Naive thymus-derived CD4-positive, alpha-beta T cell (primary cell): ENCODE measurements at regions of chr12 and their contacts with region 1.

Region 1: GRCh38 chr12:113334786-113335540 is at the start of gene SLC8B1:
- DNase-seq: peak; percentile 68 to 96 (median 80)
- ATAC-seq: peak; percentile 100
- H3K4me3 ChIP-seq: peak within 1 kb of the TSS; percentile 86
- H3K4me3 Mint-ChIP-seq: peak within 1 kb of the TSS; percentile 92 to 100 (median 98)
- H3K27ac ChIP-seq: peak within 1 kb of the TSS; percentile 76
- H3K27ac Mint-ChIP-seq: peak within 1 kb of the TSS; percentile 88 to 96 (median 91)
- H3K4me1 ChIP-seq: peaks cover 14 to 18% of the 10 kb centered on the region in 2 donors
- H3K4me1 Mint-ChIP-seq: peaks cover 19 to 40% (median 34%) of the 10 kb centered on the region in 7 donors
- H3K27me3 ChIP-seq: no peaks in the 10 kb centered on the region
- H3K27me3 Mint-ChIP-seq: no peaks in the 10 kb centered on the region
- total RNA-seq, gene SLC8B1: 40.9 to 169 (median 140) TPM

Region 2: DNA sequence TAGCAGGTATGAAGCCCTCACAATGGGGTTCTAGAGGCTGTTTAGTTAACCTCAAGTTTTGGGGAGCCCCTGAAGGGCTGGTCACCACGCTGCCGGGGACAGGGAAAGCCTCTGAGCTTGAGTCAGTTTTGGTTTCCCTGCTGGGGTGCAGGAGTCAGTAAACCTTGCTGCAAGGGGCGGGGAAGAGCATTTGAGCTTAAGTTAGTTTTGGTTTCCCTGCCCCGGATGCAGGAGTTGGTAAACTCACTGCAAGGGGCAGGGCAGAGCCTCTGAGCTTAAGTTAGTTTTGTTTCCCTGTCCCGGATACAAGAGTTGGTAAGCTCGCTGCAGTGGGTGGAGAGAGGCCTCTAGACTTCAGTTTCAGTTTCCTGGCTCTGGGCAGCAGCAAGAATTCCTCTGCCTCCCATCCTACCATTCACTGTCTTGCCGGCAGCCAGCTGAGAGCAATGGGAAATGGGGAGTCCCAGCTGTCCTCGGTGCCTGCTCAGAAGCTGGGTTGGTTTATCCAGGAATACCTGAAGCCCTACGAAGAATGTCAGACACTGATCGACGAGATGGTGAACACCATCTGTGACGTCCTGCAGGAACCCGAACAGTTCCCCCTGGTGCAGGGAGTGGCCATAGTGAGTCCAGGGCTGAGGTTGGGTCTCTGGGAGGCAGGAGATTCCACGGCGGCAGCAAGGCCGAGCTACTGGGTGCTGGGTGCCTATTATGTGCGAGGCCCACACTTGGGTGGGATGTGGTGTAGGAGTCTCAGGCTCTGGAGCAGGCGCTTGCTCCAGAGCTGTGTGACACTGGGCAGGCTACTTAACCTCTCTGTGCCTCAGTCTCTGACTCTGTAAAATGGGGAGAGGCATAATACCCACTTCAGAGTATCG is 356.6 kb before region 1 on chr12 and contains the start of gene OAS2:
- CTCF ChIA-PET with region 1: no interaction called
- POLR2A ChIA-PET with region 1: interaction called, 7 read pairs
- intact Hi-C with region 1: loop called in 1 of 2 experiments (anchors 1 kb)
- DNase-seq: peak; percentile 35 to 89 (median 85)
- ATAC-seq: peak; percentile 97
- H3K4me3 ChIP-seq: peak within 1 kb of the TSS; percentile 99
- H3K4me3 Mint-ChIP-seq: peak within 1 kb of the TSS; percentile 87 to 100 (median 96)
- H3K27ac ChIP-seq: peak within 1 kb of the TSS; percentile 89
- H3K27ac Mint-ChIP-seq: peak within 1 kb of the TSS; percentile 97 to 100 (median 99)
- H3K4me1 ChIP-seq: peaks cover 34 to 37% of the 10 kb centered on the region in 2 donors
- H3K4me1 Mint-ChIP-seq: peaks cover 30 to 59% (median 42%) of the 10 kb centered on the region in 7 donors
- H3K27me3 ChIP-seq: no peaks in the 10 kb centered on the region
- H3K27me3 Mint-ChIP-seq: no peaks in the 10 kb centered on the region
- total RNA-seq, gene OAS2: 29.9 to 238 (median 66.0) TPM

Region 3: GRCh38 chr12:113086249-113087164 is 248.5 kb before region 1 on chr12:
- CTCF ChIA-PET with region 1: no interaction called
- POLR2A ChIA-PET with region 1: no interaction called
- intact Hi-C with region 1: loop called in 1 of 2 experiments (anchors 10 kb)
- DNase-seq: peak in 2 of 9 donors; percentile 30 to 32
- ATAC-seq: peak; percentile 45
- H3K4me3 ChIP-seq: peak overlapping the region; percentile 11
- H3K4me3 Mint-ChIP-seq: peak overlapping the region; percentile 50 to 89 (median 77)
- H3K27ac ChIP-seq: peak overlapping the region; percentile 56
- H3K27ac Mint-ChIP-seq: peak overlapping the region in 8 of 9 donors; percentile 44 to 93 (median 90)
- H3K4me1 ChIP-seq: peaks cover 52 to 65% of the 10 kb centered on the region in 2 donors
- H3K4me1 Mint-ChIP-seq: peaks cover 31 to 96% (median 90%) of the 10 kb centered on the region in 7 donors
- H3K27me3 ChIP-seq: no peaks in the 10 kb centered on the region
- H3K27me3 Mint-ChIP-seq: no peaks in the 10 kb centered on the region

Region 4: DNA sequence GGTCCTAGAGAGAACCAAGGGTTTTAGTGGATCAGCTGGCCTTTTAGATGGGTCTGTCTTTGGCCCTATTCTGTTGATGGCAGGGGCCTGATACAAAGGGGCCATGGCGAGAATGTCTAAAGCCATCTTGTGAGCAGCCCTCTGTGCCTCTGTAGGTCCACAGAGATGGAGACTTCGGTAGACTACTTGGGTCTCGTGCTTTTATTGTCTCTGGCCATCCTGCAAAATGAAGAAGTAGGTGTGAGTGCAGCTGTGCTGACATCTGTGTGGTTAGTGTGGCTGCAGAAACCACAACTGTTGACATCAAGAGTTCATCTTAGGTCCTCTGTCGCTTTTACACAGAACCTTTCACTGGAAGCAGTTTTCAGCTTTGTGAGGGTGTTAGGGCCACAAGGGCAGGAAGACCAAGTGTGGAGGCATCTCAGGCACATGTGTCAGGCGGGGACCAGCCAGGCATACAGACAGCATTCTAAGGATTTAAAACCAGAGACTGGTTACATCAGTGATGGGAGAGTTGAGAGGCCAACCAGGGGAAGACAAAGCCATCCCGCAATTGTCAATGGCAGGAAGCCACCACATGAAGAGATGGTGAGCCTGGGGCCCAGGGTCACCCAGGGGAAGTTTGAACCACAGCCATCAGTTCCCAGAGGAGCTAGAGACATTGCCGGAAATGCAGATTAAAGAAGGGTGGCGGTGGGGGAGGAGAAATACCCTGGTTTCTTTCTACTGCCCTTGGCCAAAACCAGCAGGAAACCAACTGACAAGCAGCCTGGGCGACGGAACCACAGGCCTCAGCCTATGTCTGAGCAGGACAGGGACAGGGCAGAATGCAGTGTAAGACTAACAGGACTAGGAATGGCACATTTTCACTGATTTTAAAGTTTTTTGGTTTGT is 126.7 kb before region 1 on chr12:
- CTCF ChIA-PET with region 1: no interaction called
- POLR2A ChIA-PET with region 1: interaction called, 10 read pairs
- intact Hi-C with region 1: loop called in 1 of 2 experiments (anchors 5 kb)
- DNase-seq: peak; percentile 18 to 72 (median 62)
- ATAC-seq: peak; percentile 89
- H3K4me3 ChIP-seq: no peak overlapping the region
- H3K4me3 Mint-ChIP-seq: peak overlapping the region; percentile 59 to 86 (median 77)
- H3K27ac ChIP-seq: peak overlapping the region; percentile 64
- H3K27ac Mint-ChIP-seq: peak overlapping the region; percentile 82 to 97 (median 90)
- H3K4me1 ChIP-seq: peaks cover 38 to 45% of the 10 kb centered on the region in 2 donors
- H3K4me1 Mint-ChIP-seq: peaks cover 28 to 62% (median 51%) of the 10 kb centered on the region in 7 donors
- H3K27me3 ChIP-seq: no peaks in the 10 kb centered on the region
- H3K27me3 Mint-ChIP-seq: no peaks in the 10 kb centered on the region

Region 5: DNA sequence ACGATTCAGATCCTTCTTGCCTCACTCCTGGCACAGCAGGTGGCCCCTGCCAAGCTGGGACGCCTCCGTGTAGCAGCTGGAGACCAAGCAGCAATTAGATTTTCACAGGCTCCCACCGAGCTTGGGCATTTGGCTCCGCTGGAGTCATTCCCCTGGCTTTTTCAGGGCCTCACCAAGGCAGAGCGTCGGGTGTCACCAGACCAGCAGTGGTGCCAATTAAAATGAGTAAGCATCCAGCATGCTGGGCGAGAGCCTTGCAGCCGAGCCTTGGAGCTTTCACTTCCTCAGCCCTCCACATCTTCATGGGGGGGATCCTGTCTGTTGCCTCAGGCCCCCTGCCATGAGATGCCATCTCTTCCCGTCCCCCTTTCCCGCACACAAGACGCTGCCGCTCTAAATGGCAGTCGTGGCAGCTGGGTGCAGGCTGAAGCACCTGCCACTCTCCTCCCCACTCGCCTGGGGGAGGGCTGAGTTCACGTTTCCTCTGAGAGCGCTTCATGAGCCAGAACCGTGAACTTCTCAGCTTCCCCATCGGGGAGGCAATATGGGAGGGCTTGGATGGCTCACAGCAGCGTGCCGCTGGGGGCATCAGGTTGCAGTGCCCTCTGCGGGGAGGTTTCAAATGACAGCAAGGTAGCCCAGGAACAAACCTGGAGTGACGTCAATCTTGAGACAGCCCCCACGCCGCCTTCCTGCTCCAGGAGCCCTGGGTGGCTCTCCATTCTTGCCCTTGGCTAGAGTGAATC is 102.0 kb before region 1 on chr12:
- CTCF ChIA-PET with region 1: no interaction called
- POLR2A ChIA-PET with region 1: interaction called, 4 read pairs
- intact Hi-C with region 1: loop called (anchors 1 kb)
- DNase-seq: peak; percentile 46 to 91 (median 83)
- ATAC-seq: peak; percentile 95
- H3K4me3 ChIP-seq: peak overlapping the region; percentile 43
- H3K4me3 Mint-ChIP-seq: peak overlapping the region; percentile 81 to 94 (median 86)
- H3K27ac ChIP-seq: peak overlapping the region; percentile 68
- H3K27ac Mint-ChIP-seq: peak overlapping the region; percentile 86 to 96 (median 93)
- H3K4me1 ChIP-seq: peaks cover 7 to 60% of the 10 kb centered on the region in 2 donors
- H3K4me1 Mint-ChIP-seq: peaks cover 59 to 93% (median 75%) of the 10 kb centered on the region in 7 donors
- H3K27me3 ChIP-seq: no peaks in the 10 kb centered on the region
- H3K27me3 Mint-ChIP-seq: no peaks in the 10 kb centered on the region

Region 6: GRCh38 chr12:113358381-113359132 is 23.6 kb after region 1 on chr12 and contains the start of gene PLBD2:
- CTCF ChIA-PET with region 1: no interaction called
- POLR2A ChIA-PET with region 1: interaction called, 20 read pairs
- intact Hi-C with region 1: loop called (anchors 1 kb)
- DNase-seq: peak; percentile 85 to 95 (median 92)
- ATAC-seq: peak; percentile 98
- H3K4me3 ChIP-seq: peak within 1 kb of the TSS; percentile 82
- H3K4me3 Mint-ChIP-seq: peak within 1 kb of the TSS; percentile 83 to 94 (median 91)
- H3K27ac ChIP-seq: peak within 1 kb of the TSS; percentile 85
- H3K27ac Mint-ChIP-seq: peak within 1 kb of the TSS; percentile 79 to 98 (median 95)
- H3K4me1 ChIP-seq: peaks cover 0 to 5% of the 10 kb centered on the region in 2 donors
- H3K4me1 Mint-ChIP-seq: peaks cover 13 to 25% (median 17%) of the 10 kb centered on the region in 7 donors
- H3K27me3 ChIP-seq: no peaks in the 10 kb centered on the region
- H3K27me3 Mint-ChIP-seq: peaks cover 0 to 3% (median 0%) of the 10 kb centered on the region in 5 donors
- total RNA-seq, gene PLBD2: 13.2 to 25.4 (median 14.9) TPM

Region 7: GRCh38 chr12:113965951-113966797 is 631.2 kb after region 1 on chr12 and contains the start of gene RBM19:
- CTCF ChIA-PET with region 1: no interaction called
- POLR2A ChIA-PET with region 1: no interaction called
- intact Hi-C with region 1: loop called in 1 of 2 experiments (anchors 10 kb)
- DNase-seq: peak; percentile 94 to 98 (median 96)
- ATAC-seq: peak; percentile 99
- H3K4me3 ChIP-seq: peak within 1 kb of the TSS; percentile 88
- H3K4me3 Mint-ChIP-seq: peak within 1 kb of the TSS; percentile 94 to 100 (median 98)
- H3K27ac ChIP-seq: peak within 1 kb of the TSS; percentile 54
- H3K27ac Mint-ChIP-seq: peak within 1 kb of the TSS; percentile 92 to 98 (median 95)
- H3K4me1 ChIP-seq: peaks cover 5% of the 10 kb centered on the region in 2 donors
- H3K4me1 Mint-ChIP-seq: peaks cover 38 to 72% (median 53%) of the 10 kb centered on the region in 7 donors
- H3K27me3 ChIP-seq: no peaks in the 10 kb centered on the region
- H3K27me3 Mint-ChIP-seq: peaks cover 0 to 9% (median 0%) of the 10 kb centered on the region in 5 donors
- total RNA-seq, gene RBM19: 45.8 to 108 (median 67.3) TPM